ENCODE measurements at regions of chr10 and their contacts with region 1.

Region 1: GRCh38 chr10:79195091-79195923 is 126.5 kb downstream of the ZMIZ1 start:
- DNase-seq: peak; percentile 91
- H3K4me3 ChIP-seq: no peak overlapping the region
- H3K27ac ChIP-seq: no peak overlapping the region
- H3K4me1 ChIP-seq: peaks cover 9% of the 10 kb centered on the region
- H3K27me3 ChIP-seq: no peaks in the 10 kb centered on the region
- CTCF ChIP-seq: peak; percentile 90 to 95 (median 94)
- POLR2A ChIP-seq: no peak

Region 2: DNA sequence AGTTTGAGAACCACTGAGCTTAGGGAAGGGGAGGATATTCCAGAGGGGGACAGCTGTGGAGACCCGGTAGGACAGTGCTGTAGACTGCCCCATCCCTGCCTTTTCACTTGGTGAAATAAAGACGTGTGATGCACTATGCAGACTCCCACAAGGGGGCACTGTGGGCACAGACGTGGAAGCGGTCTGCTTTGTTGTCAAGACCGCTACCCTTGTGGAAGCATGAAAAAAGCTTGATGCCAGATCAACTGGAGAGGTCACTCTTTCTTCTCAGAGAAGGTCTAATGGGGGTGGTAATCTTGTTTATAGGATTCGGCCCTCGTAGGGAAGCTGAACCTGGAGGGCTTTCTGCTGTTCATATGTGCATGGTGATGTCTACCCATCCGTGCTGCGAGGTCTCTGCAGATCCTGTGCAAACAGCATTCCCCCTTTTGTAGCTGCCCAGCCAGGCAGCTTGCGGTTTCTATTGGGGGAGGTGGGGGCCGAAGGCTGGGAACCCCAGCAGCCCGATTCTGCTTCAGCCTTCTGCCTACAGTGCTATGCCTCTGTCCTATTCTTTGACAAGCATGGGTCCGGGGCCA is 1147.9 kb before region 1 on chr10:
- intact Hi-C with region 1: loop called (anchors 10 kb)
- DNase-seq: peak; percentile 94
- H3K4me3 ChIP-seq: no peak overlapping the region
- H3K27ac ChIP-seq: no peak overlapping the region
- H3K4me1 ChIP-seq: peaks cover 3% of the 10 kb centered on the region
- H3K27me3 ChIP-seq: no peaks in the 10 kb centered on the region
- CTCF ChIP-seq: peak; percentile 61 to 85 (median 82)
- POLR2A ChIP-seq: no peak

Region 3: DNA sequence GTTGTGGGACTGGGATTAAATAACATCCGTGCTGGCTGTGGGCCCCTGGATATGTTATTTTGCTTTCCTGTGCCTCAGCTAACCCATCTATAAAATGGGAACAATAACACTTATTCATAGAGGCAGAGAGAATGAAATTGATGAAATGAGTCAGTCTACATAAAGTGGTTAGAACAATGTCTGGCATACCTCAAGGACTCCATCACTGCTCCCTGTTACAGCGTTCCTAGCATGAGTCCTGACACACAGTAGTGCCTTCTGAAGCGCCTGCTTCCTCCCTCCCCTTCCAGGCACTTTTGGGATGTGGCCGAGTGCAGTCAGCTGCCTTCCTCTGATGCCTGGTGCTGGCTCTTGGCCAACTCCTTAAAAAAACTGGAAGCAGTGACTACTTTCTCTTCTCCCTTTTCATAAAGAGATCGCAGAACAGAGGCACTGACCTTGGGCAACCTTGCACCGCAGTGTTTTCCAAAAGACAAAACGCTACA is 234.9 kb before region 1 on chr10:
- intact Hi-C with region 1: loop called (anchors 10 kb)
- DNase-seq: peak; percentile 64
- H3K4me3 ChIP-seq: no peak overlapping the region
- H3K27ac ChIP-seq: no peak overlapping the region
- H3K4me1 ChIP-seq: peaks cover 8% of the 10 kb centered on the region
- H3K27me3 ChIP-seq: no peaks in the 10 kb centered on the region
- CTCF ChIP-seq: no peak
- POLR2A ChIP-seq: no peak

Region 4: GRCh38 chr10:79068562-79069324 is 126.6 kb before region 1 on chr10 and contains the start of gene ZMIZ1:
- intact Hi-C with region 1: loop called (anchors 10 kb)
- DNase-seq: peak; percentile 91
- H3K4me3 ChIP-seq: peak within 1 kb of the TSS; percentile 83 to 84
- H3K27ac ChIP-seq: peak within 1 kb of the TSS; percentile 88
- H3K4me1 ChIP-seq: peaks cover 36% of the 10 kb centered on the region
- H3K27me3 ChIP-seq: no peaks in the 10 kb centered on the region
- CTCF ChIP-seq: peak in 2 of 3 experiments; percentile 0 to 8
- POLR2A ChIP-seq: no peak
- total RNA-seq, gene ZMIZ1: 18.8 to 22.0 TPM

Measured in testis (tissue), 5 donors.